ENCODE measurements at regions of chr3 and their contacts with region 1.

Region 1: GRCh38 chr3:188954590-188955208 is 217.1 kb upstream of the TPRG1 start:
- DNase-seq: peak; percentile 91
- H3K4me3 Mint-ChIP-seq: no peak overlapping the region
- H3K27ac Mint-ChIP-seq: no peak overlapping the region
- H3K4me1 Mint-ChIP-seq: peaks cover 39% of the 10 kb centered on the region
- H3K27me3 Mint-ChIP-seq: no peaks in the 10 kb centered on the region

Region 2: GRCh38 chr3:188061133-188061532 is 893.6 kb before region 1 on chr3:
- CTCF ChIA-PET with region 1: no interaction called
- intact Hi-C with region 1: loop called (anchors 5 kb)
- DNase-seq: peak; percentile 74
- H3K4me3 Mint-ChIP-seq: no peak overlapping the region
- H3K27ac Mint-ChIP-seq: peak overlapping the region; percentile 68
- H3K4me1 Mint-ChIP-seq: peaks cover 32% of the 10 kb centered on the region
- H3K27me3 Mint-ChIP-seq: no peaks in the 10 kb centered on the region

Region 3: GRCh38 chr3:188389711-188390342 is 564.9 kb before region 1 on chr3:
- CTCF ChIA-PET with region 1: interaction called, 4 read pairs
- intact Hi-C with region 1: loop called (anchors 5 kb)
- DNase-seq: peak; percentile 85
- H3K4me3 Mint-ChIP-seq: no peak overlapping the region
- H3K27ac Mint-ChIP-seq: peak overlapping the region; percentile 67
- H3K4me1 Mint-ChIP-seq: peaks cover 39% of the 10 kb centered on the region
- H3K27me3 Mint-ChIP-seq: no peaks in the 10 kb centered on the region

Region 4: DNA sequence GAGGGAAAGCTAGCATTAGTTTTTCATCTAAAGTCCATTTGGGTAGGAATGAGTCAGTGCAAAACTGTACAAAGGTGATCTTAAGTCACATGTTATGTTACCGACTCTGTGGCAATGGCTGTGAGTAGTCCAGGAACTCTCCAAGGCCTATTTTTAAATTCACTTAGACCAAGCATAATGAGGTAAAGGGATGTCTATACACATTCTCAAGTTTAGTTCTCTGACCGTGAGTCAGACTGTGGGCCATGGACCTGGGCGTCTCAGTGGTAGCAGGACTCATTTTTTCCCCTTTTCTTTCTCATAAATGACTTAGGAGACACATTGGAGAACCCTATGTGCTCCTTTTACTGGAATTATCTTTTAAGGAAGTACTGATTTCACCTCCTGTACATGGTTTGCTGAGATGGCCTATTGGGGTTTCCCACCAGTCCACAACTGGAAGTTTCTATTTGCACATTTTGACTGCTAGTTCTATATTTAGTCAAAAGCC is 271.6 kb before region 1 on chr3:
- CTCF ChIA-PET with region 1: interaction called, 6 read pairs
- intact Hi-C with region 1: loop called (anchors 5 kb)
- DNase-seq: peak; percentile 51
- H3K4me3 Mint-ChIP-seq: no peak overlapping the region
- H3K27ac Mint-ChIP-seq: peak overlapping the region; percentile 37
- H3K4me1 Mint-ChIP-seq: peaks cover 32% of the 10 kb centered on the region
- H3K27me3 Mint-ChIP-seq: no peaks in the 10 kb centered on the region

Region 5: GRCh38 chr3:188934989-188935388 is 19.7 kb before region 1 on chr3:
- CTCF ChIA-PET with region 1: interaction called, 15 read pairs
- intact Hi-C with region 1: no loop called
- DNase-seq: no peak
- H3K4me3 Mint-ChIP-seq: no peak overlapping the region
- H3K27ac Mint-ChIP-seq: no peak overlapping the region
- H3K4me1 Mint-ChIP-seq: no peaks in the 10 kb centered on the region
- H3K27me3 Mint-ChIP-seq: no peaks in the 10 kb centered on the region

Region 6: GRCh38 chr3:189041482-189042090 is 86.9 kb after region 1 on chr3:
- CTCF ChIA-PET with region 1: interaction called, 19 read pairs
- intact Hi-C with region 1: loop called (anchors 2 kb)
- DNase-seq: peak; percentile 90
- H3K4me3 Mint-ChIP-seq: no peak overlapping the region
- H3K27ac Mint-ChIP-seq: no peak overlapping the region
- H3K4me1 Mint-ChIP-seq: peaks cover 29% of the 10 kb centered on the region
- H3K27me3 Mint-ChIP-seq: peaks cover 3% of the 10 kb centered on the region